Posterior vena cava (tissue), 2 donors: ENCODE measurements at regions of chr6 and their contacts with region 1.

Region 1: GRCh38 chr6:150905769-150906506 is 40.4 kb downstream of the MTHFD1L start:
- DNase-seq: no peak

Region 2: GRCh38 chr6:151004415-151005024 is 98.6 kb after region 1 on chr6:
- intact Hi-C with region 1: loop called in 1 of 2 experiments (anchors 10 kb)
- DNase-seq: no peak